CD14-positive monocyte (primary cell): ENCODE measurements at regions of chr18 and their contacts with region 1.

Region 1: DNA sequence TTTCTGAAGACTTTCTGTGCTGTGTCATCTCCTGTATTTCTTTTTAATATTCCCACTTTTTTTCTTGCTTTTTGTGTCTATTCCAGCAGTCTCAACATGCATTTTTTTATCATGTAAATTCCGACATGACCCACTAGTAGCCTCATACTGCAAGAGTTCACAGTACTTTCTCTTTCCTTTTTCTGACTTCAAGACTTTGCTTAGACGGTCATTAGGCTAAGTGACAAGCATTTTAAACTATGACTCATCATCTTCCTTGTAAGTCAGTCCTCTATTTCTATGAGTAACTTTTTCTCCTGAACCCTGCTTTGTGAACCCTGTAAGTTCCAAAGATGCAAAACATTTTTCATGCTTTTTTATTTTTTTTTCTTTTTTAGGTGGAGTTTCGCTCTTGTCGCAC is 381.2 kb downstream of the TXNL1 start:
- DNase-seq: peak; percentile 65 to 85 (median 75)
- H3K4me3 ChIP-seq: peak overlapping the region in 1 of 3 experiments; percentile 41
- H3K4me3 Mint-ChIP-seq: peak overlapping the region in 1 of 2 donors; percentile 77
- H3K27ac ChIP-seq: peak overlapping the region; percentile 34 to 35
- H3K27ac Mint-ChIP-seq: peak overlapping the region; percentile 55 to 95 (median 85)
- H3K4me1 ChIP-seq: peaks cover 21 to 22% of the 10 kb centered on the region in 2 donors
- H3K4me1 Mint-ChIP-seq: peaks cover 21% of the 10 kb centered on the region
- H3K27me3 ChIP-seq: no peaks in the 10 kb centered on the region
- H3K27me3 Mint-ChIP-seq: peaks cover 0 to 2% (median 0%) of the 10 kb centered on the region in 3 donors
- CTCF ChIP-seq: no peak

Region 2: DNA sequence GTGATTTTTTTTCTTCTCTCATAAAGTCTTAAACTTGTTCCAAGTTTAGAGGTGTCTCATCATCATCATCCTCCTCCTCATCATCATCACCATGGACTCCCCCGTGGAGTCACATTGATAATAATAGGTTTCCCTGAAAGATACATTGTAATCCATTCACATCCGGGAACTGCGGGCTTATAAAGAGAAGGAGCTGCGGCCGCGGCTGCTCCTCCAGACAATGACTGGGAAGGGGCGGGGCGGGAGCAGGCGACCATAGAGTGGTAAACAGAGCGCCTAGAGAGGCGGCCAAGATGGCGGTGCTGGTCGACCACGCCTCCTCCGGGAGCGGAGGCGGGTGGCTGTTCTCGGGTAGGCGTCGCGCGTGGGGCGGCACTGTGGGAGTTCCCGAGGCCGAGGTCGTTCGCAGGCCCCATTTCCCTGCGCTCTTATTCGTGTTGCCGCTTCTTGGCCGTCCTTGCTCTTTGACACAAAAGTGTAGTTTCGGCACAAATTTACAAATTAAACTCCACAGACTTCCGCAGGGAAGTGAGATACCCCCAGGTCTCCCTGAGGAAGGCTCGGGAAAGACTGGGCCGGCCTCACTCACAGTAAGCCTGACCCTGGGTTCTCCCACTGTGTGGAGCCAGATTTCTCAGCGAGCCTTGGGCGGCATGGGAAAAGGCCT is 667.4 kb before region 1 on chr18:
- intact Hi-C with region 1: loop called in 1 of 2 experiments (anchors 10 kb)
- DNase-seq: peak; percentile 92 to 94 (median 94)
- H3K4me3 ChIP-seq: peak overlapping the region; percentile 59 to 99 (median 81)
- H3K4me3 Mint-ChIP-seq: peak overlapping the region; percentile 81 to 94
- H3K27ac ChIP-seq: peak overlapping the region; percentile 58 to 83
- H3K27ac Mint-ChIP-seq: peak overlapping the region; percentile 72 to 92 (median 86)
- H3K4me1 ChIP-seq: peaks cover 17 to 34% of the 10 kb centered on the region in 2 donors
- H3K4me1 Mint-ChIP-seq: peaks cover 26% of the 10 kb centered on the region
- H3K27me3 ChIP-seq: no peaks in the 10 kb centered on the region
- H3K27me3 Mint-ChIP-seq: peaks cover 0 to 5% (median 3%) of the 10 kb centered on the region in 3 donors
- CTCF ChIP-seq: no peak

Region 3: DNA sequence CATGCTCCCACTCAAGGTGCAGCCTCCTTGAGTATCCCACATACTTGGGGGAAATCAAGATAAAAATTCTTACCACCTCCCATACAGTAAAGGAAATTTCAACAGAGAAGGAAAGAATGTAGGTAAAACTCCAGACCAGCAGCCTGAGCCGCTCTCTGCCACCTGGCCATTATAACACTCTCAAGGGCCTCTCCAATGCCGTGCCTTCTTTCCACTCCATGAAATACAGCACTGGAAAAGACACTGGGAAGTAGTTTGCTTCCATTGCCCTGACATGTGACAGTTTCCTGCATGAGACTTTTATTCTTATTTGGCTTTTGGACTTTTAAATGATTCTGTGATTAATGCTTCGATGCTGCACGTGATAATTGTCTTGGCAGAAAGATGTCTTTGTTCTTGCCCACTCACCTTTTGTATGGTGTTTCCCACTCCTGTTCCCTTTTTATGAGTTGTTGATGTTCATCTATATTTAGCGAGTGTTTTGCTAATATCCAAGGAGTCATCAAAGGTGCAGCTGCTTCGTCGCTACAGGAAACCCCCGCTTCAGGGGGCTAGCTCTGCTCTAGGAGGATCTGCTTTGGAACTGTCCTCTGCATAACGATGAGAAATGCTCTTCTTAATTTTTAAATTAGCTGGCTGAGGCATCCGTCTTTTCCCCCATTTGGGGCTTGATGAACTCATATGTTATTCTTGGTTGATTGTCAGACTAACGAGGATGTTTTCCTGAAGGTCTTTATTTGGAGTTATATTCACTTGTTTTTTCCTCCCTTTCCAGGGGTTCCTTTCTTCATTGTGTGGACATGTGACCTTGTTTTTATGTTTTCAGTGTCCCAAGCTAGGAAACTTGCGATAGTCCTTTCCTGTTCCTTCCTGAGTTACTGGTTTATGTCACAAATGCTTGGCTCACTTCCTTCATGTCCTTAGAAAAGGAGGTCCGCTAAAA is 201.8 kb after region 1 on chr18:
- intact Hi-C with region 1: loop called in 1 of 2 experiments (anchors 5 kb)
- DNase-seq: no peak
- H3K4me3 ChIP-seq: no peak overlapping the region
- H3K4me3 Mint-ChIP-seq: no peak overlapping the region
- H3K27ac ChIP-seq: peak overlapping the region in 1 of 2 donors; percentile 17
- H3K27ac Mint-ChIP-seq: peak overlapping the region in 3 of 7 donors; percentile 10 to 71 (median 18)
- H3K4me1 ChIP-seq: peaks cover 40 to 42% of the 10 kb centered on the region in 2 donors
- H3K4me1 Mint-ChIP-seq: peaks cover 37% of the 10 kb centered on the region
- H3K27me3 ChIP-seq: no peaks in the 10 kb centered on the region
- H3K27me3 Mint-ChIP-seq: peaks cover 0 to 3% (median 0%) of the 10 kb centered on the region in 3 donors
- CTCF ChIP-seq: no peak